GM10248 (cell line): ENCODE measurements at regions of chr22 and their contacts with region 1.

Region 1: DNA sequence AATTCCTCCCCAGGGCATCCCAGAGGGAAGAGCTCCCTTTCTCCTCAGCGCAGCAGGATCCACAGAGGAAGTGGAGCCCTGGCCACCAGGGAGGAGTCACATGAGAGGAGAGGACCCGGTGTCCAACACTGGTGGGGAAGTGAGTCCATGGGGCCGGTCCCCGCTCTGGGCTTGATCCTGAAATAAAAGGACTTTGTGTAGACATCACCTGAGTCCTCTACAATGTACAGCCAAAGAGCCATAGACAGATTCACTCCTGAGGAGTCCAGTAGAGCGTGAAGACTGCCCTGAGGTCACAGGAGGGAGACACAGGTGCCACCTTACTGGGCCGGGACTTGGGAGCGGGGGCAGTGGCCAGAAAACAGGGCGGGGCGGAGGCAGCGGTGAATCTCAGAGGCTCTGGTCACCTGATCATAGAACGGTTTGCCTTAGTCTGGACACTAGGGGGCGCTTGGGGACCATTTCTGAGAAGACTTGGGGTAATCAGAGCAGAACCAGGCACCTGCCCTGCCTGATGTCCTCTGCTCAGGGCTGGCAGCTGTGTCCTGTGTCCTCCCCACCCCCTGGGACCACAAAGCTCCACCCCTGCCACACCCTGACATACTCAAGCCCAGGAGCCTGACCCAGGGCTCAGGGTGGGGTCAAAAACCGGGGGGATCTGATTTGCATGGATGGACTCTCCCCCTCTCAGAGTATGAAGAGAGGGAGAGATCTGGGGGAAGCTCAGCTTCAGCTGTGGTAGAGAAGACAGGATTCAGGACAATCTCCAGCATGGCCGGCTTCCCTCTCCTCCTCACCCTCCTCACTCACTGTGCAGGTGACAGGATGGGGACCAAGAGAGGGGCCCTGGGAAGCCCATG is 112.7 kb downstream of the VPREB1 start:
- DNase-seq: peak; percentile 94
- CTCF ChIP-seq: peak; percentile 68

Region 2: GRCh38 chr22:22329792-22330191 is 27.5 kb before region 1 on chr22:
- CTCF ChIA-PET with region 1: no interaction called
- POLR2A ChIA-PET with region 1: no interaction called
- DNase-seq: no peak
- CTCF ChIP-seq: no peak

Region 3: GRCh38 chr22:22369964-22370270 is 12.7 kb after region 1 on chr22:
- CTCF ChIA-PET with region 1: interaction called, 10 read pairs
- POLR2A ChIA-PET with region 1: no interaction called
- DNase-seq: no peak
- CTCF ChIP-seq: no peak